Activated CD4-positive, alpha-beta T cell treated with anti-CD3 and anti-CD28 coated beads for 36 hours (primary cell): ENCODE measurements at regions of chr17 and their contacts with region 1.

Region 1: DNA sequence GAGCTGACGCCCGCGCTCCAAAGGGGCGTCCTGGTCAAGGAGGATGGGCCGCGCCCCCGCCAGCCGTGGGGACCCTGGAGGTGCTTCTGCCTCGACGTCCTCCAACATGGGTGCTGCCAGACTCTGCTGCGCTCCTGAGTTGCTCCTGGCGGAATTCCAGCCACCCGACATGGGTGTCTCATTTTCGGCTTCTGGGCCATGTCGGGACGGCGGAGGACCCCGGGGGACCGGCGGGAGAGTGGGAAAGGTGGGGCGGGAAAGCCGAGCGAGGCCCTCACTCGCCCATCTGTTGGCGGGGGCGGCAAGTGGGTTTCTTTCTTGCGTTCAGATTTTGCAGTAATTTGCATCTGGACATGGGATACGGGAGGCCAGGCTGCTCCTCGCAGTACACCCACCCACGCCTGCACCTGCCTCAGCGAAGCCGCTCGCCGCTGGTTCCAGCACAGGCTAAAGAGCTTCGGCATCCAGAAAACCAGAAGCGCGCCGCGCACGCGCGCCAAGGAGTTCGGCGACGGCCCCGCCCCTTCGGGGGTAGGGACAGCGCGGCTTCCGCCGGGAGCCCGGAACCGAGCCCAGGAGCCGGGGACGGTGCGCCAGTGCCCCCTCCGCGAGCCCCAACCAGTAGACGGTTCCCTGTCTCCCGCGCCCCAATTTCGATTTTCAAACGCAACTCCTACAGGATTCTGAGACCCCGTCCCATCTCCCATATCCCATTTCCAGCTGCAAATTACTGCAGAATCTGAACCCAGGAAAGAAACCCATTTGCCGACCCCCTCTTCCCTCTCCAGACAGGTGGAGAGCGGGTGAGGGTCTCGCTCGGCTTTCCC is at the start of gene ARMC7:
- DNase-seq: peak; percentile 95
- ATAC-seq: peak; percentile 82
- H3K4me3 Mint-ChIP-seq: peak within 1 kb of the TSS; percentile 79
- H3K27ac Mint-ChIP-seq: peak within 1 kb of the TSS; percentile 92
- H3K4me1 Mint-ChIP-seq: peaks cover 28% of the 10 kb centered on the region
- H3K27me3 Mint-ChIP-seq: no peaks in the 10 kb centered on the region
- total RNA-seq, gene ARMC7: 6.7 to 7.7 TPM

Region 2: GRCh38 chr17:74610108-74610507 is 499.5 kb before region 1 on chr17:
- CTCF ChIA-PET with region 1: no interaction called
- POLR2A ChIA-PET with region 1: no interaction called
- intact Hi-C with region 1: no loop called
- DNase-seq: no peak
- ATAC-seq: no peak
- H3K4me3 Mint-ChIP-seq: no peak overlapping the region
- H3K27ac Mint-ChIP-seq: no peak overlapping the region
- H3K4me1 Mint-ChIP-seq: no peaks in the 10 kb centered on the region
- H3K27me3 Mint-ChIP-seq: peaks cover 2% of the 10 kb centered on the region

Region 3: GRCh38 chr17:74961657-74962490 is 147.7 kb before region 1 on chr17:
- CTCF ChIA-PET with region 1: interaction called, 22 read pairs
- POLR2A ChIA-PET with region 1: interaction called, 4 read pairs
- intact Hi-C with region 1: loop called (anchors 1 to 5 kb)
- DNase-seq: peak; percentile 92
- ATAC-seq: peak; percentile 79
- H3K4me3 Mint-ChIP-seq: no peak overlapping the region
- H3K27ac Mint-ChIP-seq: no peak overlapping the region
- H3K4me1 Mint-ChIP-seq: peaks cover 6% of the 10 kb centered on the region
- H3K27me3 Mint-ChIP-seq: no peaks in the 10 kb centered on the region

Region 4: DNA sequence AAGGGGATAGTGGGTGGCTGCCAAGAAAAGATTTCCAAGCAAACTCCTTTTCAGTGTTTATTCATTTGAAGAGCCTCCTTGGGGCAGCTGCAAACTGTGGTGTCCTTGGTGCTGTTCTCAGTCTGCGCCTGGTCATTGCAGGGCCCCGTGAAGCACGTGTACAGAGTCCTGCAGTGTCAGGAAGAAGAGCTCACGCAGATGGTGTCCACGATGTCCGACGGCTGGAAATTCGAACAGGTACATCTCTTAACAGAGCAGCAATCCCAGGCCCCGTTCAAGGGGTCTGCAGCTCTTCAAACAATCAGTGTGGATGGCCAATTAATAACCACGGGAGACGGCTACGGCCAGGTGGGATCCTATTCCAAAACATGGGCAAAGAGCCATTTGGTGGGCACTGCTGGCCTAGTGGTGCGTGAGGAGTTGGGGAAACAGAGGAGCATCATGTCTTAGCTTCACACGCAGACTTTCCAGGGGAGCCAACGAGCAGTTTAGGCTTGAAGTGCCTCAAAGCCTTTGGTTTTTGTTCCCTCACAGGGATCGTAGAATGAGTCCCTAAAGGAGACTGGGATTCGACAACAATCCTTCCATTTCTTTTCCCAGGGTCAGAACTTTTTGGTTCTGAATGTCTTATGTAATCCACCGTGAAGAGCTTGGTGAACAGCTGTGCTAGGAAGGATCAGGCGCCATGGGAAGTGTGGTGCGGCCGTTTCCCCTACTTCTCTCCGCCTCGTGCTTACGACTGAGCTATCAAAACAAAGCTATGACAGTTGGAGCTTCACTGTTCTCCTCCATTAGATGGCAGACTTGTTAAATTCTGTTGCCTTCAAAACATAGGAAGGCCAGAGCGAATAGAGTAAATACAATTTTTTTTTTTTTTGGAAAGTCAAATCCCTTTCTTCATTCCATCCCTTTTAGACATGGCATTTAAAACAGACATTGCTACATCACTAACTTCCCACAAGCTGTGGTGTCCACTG is 50.0 kb before region 1 on chr17:
- CTCF ChIA-PET with region 1: interaction called, 11 read pairs
- POLR2A ChIA-PET with region 1: interaction called, 4 read pairs
- intact Hi-C with region 1: no loop called
- DNase-seq: no peak
- ATAC-seq: peak; percentile 39
- H3K4me3 Mint-ChIP-seq: no peak overlapping the region
- H3K27ac Mint-ChIP-seq: no peak overlapping the region
- H3K4me1 Mint-ChIP-seq: peaks cover 18% of the 10 kb centered on the region
- H3K27me3 Mint-ChIP-seq: no peaks in the 10 kb centered on the region

Region 5: GRCh38 chr17:75131280-75132017 is 21.8 kb after region 1 on chr17 and contains the start of gene NT5C:
- CTCF ChIA-PET with region 1: interaction called, 72 read pairs
- POLR2A ChIA-PET with region 1: interaction called, 8 read pairs
- intact Hi-C with region 1: loop called (anchors 1 kb)
- DNase-seq: peak; percentile 84
- ATAC-seq: peak; percentile 82
- H3K4me3 Mint-ChIP-seq: peak within 1 kb of the TSS; percentile 83
- H3K27ac Mint-ChIP-seq: peak within 1 kb of the TSS; percentile 90
- H3K4me1 Mint-ChIP-seq: peaks cover 11% of the 10 kb centered on the region
- H3K27me3 Mint-ChIP-seq: no peaks in the 10 kb centered on the region
- total RNA-seq, gene NT5C: 51.7 to 61.5 TPM

Region 6: DNA sequence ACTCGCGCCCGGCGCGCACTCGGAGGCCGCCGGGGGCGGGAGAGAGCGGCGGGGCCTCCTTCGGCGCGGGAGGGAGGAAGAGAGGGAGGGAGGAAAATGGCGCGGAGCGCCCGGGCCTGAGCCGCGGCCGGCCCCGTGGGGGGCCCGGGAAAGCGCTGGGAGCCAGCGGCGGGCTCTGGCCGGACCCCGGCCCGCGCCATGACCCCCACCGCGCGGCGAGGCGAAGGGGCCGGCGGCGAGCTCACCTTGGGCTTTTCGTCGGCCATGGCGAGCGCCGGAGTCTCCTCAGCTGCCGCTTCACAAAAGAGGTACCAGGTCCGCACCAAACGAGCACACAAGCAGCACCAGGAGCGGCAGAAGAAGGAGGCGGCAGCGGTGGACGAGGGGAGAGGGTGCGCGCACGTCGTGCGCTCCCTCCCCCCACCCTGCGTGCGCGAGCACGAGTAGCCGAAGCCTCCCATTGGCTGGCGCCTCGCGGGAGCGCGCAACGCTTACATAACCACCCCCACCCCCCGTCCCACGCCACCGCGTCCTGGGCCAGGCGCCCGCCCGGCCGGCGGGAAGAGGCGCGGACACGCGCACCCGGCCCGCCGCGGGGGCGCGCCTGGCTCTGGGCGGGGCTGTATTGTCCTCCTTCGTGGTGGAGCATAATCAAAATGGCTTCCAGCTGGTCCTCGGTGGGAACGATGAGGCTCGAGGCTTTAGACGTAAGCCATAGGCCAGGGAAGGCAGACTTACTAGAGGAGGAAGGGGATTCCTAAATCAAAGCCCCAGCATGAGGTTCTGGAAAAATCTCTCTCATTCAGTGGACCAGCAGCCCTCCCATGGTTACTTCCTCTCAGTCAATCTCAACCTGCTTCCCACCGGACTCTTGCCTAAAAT is 73.2 kb after region 1 on chr17 and contains the start of gene SUMO2:
- CTCF ChIA-PET with region 1: interaction called, 17 read pairs
- POLR2A ChIA-PET with region 1: no interaction called
- intact Hi-C with region 1: no loop called
- DNase-seq: peak; percentile 98
- ATAC-seq: peak; percentile 85
- H3K4me3 Mint-ChIP-seq: peak within 1 kb of the TSS; percentile 97
- H3K27ac Mint-ChIP-seq: peak within 1 kb of the TSS; percentile 96
- H3K4me1 Mint-ChIP-seq: peaks cover 45% of the 10 kb centered on the region
- H3K27me3 Mint-ChIP-seq: no peaks in the 10 kb centered on the region
- total RNA-seq, gene SUMO2: 594 to 727 TPM

Region 7: GRCh38 chr17:75238684-75239191 is 129.1 kb after region 1 on chr17:
- CTCF ChIA-PET with region 1: interaction called, 17 read pairs
- POLR2A ChIA-PET with region 1: no interaction called
- intact Hi-C with region 1: loop called in 1 of 2 experiments (anchors 1 kb)
- DNase-seq: peak; percentile 79
- ATAC-seq: peak; percentile 71
- H3K4me3 Mint-ChIP-seq: no peak overlapping the region
- H3K27ac Mint-ChIP-seq: peak overlapping the region; percentile 87
- H3K4me1 Mint-ChIP-seq: peaks cover 37% of the 10 kb centered on the region
- H3K27me3 Mint-ChIP-seq: no peaks in the 10 kb centered on the region